Right lobe of liver (tissue), 6 donors: ENCODE measurements at regions of chr7 and their contacts with region 1.

Region 1: DNA sequence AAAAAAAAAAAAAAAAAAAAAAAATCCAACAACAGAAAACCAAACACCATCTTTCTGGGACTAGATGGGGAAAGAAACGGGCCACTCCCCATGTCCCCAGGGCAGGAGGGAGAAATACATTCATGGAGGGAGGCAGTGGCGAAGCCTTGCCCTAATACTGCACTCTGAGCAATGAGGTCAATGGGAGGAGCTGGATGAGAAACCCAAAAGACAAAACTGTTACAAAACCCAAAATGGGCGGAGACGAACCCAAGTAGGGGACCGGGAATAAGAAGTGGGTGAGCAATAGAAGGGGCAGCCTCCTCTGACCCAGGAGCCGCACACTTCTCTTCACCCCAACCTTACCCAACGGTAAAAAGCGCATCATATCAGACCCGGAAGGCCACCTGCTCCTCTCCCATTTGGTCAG is 6.6 kb downstream of the GNB2 start:
- DNase-seq: no peak
- ATAC-seq: peak in 2 of 4 donors; percentile 4 to 5
- H3K4me3 ChIP-seq: no peak overlapping the region
- H3K27ac ChIP-seq: no peak overlapping the region
- H3K4me1 ChIP-seq: peaks cover 0 to 5% (median 2%) of the 10 kb centered on the region in 4 donors
- H3K27me3 ChIP-seq: no peaks in the 10 kb centered on the region
- CTCF ChIP-seq: no peak
- POLR2A ChIP-seq: no peak

Region 2: DNA sequence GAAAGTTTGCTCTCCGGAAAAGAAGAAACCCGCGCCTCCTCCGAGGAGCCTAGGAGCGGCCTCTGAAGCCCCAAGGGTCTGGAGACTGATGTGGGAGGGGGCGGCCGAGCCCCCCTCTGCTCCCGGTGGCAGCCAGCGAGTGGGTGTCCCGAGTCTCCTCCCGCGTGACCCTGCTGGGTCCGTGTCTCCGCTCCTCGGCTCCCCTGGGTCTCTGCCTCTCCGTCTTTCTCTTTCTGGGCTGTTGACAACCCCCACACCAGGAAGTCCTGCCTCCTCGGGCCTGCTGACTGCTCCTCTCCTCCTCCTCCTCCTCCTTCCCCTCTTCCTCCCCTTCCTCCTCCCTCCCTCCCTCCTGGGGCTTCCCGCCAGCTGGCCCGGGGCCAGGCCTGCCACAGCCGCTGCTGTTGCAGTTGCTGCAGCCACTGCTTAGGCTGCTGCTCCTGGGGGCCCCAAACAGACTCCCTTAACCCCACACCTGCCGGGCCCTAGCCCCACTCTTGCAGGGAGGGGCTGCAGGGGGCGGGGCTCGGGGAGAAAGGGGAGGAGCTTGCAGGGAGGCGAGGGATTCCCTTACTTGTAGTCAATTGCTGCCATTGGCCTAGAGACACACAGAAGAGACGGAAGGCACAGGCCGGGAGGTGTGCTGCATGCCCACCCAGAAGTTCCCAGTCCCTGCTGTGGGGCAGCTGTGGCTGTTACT is 201.1 kb before region 1 on chr7 and contains the start of gene TSC22D4:
- intact Hi-C with region 1: loop called (anchors 10 kb)
- DNase-seq: peak; percentile 95 to 97 (median 96)
- ATAC-seq: peak; percentile 86 to 92 (median 91)
- H3K4me3 ChIP-seq: peak within 1 kb of the TSS; percentile 77 to 96 (median 96)
- H3K27ac ChIP-seq: peak within 1 kb of the TSS; percentile 84 to 95 (median 86)
- H3K4me1 ChIP-seq: peaks cover 0 to 21% (median 3%) of the 10 kb centered on the region in 4 donors
- H3K27me3 ChIP-seq: no peaks in the 10 kb centered on the region
- CTCF ChIP-seq: no peak
- POLR2A ChIP-seq: peak; percentile 66
- total RNA-seq, gene TSC22D4: 12.5 to 20.5 (median 17.0) TPM

Region 3: GRCh38 chr7:100626530-100627237 is 53.5 kb before region 1 on chr7:
- intact Hi-C with region 1: loop called (anchors 10 kb)
- DNase-seq: peak; percentile 89 to 94 (median 92)
- ATAC-seq: peak; percentile 90 to 93 (median 92)
- H3K4me3 ChIP-seq: no peak overlapping the region
- H3K27ac ChIP-seq: peak overlapping the region in 2 of 3 donors; percentile 11 to 64
- H3K4me1 ChIP-seq: peaks cover 0 to 38% (median 20%) of the 10 kb centered on the region in 4 donors
- H3K27me3 ChIP-seq: no peaks in the 10 kb centered on the region
- CTCF ChIP-seq: no peak
- POLR2A ChIP-seq: peak; percentile 17

Region 4: DNA sequence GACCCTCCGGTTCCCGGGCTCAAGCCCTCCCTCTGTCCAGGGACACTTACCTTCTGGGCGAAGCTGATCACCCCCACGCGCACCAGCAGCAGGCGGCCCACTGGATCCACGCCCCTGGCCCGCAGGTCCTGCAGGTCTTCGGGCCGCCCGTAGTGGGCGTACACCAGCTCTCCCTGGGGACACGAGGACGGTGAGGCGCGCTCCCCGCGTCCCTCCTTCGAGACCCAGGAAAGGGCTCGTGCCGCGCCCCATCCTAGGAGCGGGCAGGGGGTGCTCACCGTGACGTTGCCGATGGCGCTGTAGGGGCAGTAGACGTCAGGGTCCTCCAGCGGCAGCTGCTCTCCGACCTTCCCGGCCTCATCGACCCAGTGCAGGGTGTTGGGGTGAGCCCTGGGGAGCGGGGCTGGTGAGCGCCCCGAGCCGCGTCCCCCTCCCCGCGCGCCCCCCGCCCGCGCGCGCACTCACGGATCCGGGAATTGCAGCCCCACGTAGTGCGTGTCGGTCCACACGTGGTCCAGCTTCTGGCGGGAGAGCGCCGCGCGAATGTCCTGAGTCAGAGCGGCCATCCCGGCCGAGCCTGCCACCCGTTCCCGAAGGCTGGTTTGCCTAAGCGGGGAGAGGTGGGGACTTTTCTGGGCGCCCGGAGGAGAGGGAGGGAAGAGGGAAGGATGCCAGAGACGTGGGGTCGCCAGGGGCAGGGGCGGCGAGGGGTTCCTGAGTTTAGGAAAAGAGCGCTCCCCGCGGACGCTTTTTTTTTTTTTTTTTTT is 47.0 kb before region 1 on chr7:
- intact Hi-C with region 1: loop called (anchors 10 kb)
- DNase-seq: peak in 1 of 3 donors; percentile 42
- ATAC-seq: peak; percentile 24 to 47 (median 42)
- H3K4me3 ChIP-seq: peak overlapping the region; percentile 23 to 30 (median 27)
- H3K27ac ChIP-seq: no peak overlapping the region
- H3K4me1 ChIP-seq: no peaks in the 10 kb centered on the region
- H3K27me3 ChIP-seq: no peaks in the 10 kb centered on the region
- CTCF ChIP-seq: no peak
- POLR2A ChIP-seq: no peak

Region 5: DNA sequence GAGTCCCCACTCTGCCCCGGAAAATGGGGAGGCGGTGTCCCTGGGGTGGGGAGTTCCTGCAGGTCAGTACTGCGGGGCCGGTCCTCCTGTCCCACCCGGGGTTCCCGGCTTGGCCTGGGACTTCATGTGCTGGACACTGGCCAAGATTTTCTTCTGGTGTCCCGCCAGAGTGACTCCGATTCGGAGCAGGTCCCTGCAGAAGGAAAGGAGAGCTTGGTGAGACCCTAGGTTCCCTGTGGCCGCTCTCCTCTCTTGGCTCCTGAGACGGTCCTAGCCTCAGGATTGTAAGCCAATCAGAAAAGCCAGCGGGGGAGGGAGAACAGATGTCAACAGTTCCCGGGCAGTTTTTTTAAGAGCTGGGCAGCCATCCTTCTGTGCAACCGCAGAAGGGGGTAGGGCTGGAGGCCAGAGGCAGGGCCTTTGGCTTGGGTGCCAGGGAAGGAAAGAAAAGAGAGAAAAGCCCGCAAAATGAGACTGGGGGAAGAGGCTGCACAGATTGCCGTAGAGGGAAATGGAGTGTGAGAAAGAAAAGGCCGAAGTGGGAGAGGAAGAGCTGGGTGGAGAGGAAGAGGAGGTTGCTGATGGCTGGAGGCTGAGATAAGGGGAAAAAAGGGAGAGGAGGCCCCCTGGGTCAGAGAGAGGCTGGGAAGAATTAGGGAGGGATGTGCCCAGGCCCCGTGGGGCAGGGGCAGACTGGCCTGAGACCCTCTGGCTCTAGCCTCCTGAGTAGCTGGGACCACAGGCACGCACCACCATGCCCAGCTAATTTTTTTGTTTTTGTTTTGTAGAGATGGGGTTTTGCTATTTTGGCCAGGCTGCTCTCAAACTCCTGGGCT is 123.4 kb after region 1 on chr7:
- intact Hi-C with region 1: no loop called
- DNase-seq: no peak
- ATAC-seq: peak; percentile 39 to 79 (median 40)
- H3K4me3 ChIP-seq: no peak overlapping the region
- H3K27ac ChIP-seq: peak overlapping the region in 1 of 3 donors; percentile 8
- H3K4me1 ChIP-seq: peaks cover 0 to 4% (median 0%) of the 10 kb centered on the region in 4 donors
- H3K27me3 ChIP-seq: no peaks in the 10 kb centered on the region
- CTCF ChIP-seq: no peak
- POLR2A ChIP-seq: no peak